ENCODE measurements at regions of chr9 and their contacts with region 1.

Region 1: GRCh38 chr9:31683116-31683515 is 701.3 kb upstream of the ACO1 start:
- DNase-seq: no peak
- H3K4me3 ChIP-seq: no peak overlapping the region
- H3K27ac ChIP-seq: no peak overlapping the region
- H3K4me1 ChIP-seq: peaks cover 0 to 3% (median 0%) of the 10 kb centered on the region in 4 donors
- H3K27me3 ChIP-seq: no peaks in the 10 kb centered on the region
- CTCF ChIP-seq: no peak
- EP300 ChIP-seq: no peak
- POLR2A ChIP-seq: no peak

Region 2: DNA sequence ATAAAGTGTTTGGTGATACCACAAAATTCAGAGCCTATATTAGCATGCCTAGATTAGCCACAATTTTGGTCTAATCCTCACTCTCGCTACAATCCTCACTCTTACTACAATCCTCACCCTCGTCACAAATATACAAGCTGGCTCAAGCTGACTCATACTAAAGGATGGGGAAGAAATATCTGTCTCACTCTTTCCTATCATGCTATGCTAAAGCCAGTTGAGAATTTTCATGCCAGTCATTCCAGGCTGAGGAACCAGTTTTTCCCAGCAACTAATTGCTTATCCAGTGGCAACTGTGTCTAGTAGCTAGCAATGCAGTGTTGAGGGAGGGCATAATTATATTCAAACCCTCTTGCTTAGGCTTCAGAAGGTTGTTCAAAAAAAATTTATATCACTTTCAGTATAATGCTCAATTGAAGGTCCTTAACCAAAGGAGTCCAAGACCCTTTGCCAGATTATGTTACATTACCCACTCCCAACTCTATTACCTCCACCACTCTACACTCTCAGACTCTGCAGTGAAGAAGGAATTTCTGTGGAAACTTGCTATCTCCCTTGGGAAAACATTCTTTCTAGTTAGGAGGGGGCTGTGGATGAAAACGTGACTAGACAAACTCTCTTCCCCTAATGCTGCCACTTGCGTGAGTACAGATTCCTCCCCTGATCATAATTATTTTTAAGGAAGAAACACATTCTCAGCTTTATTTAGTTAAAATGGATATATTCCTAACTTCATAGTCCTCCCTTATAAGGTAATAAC is 108.9 kb before region 1 on chr9:
- intact Hi-C with region 1: loop called (anchors 10 kb)
- DNase-seq: no peak
- H3K4me3 ChIP-seq: no peak overlapping the region
- H3K27ac ChIP-seq: no peak overlapping the region
- H3K4me1 ChIP-seq: no peaks in the 10 kb centered on the region
- H3K27me3 ChIP-seq: no peaks in the 10 kb centered on the region
- CTCF ChIP-seq: no peak
- EP300 ChIP-seq: no peak
- POLR2A ChIP-seq: no peak